ENCODE measurements at regions of chr3 and their contacts with region 1.

Region 1: DNA sequence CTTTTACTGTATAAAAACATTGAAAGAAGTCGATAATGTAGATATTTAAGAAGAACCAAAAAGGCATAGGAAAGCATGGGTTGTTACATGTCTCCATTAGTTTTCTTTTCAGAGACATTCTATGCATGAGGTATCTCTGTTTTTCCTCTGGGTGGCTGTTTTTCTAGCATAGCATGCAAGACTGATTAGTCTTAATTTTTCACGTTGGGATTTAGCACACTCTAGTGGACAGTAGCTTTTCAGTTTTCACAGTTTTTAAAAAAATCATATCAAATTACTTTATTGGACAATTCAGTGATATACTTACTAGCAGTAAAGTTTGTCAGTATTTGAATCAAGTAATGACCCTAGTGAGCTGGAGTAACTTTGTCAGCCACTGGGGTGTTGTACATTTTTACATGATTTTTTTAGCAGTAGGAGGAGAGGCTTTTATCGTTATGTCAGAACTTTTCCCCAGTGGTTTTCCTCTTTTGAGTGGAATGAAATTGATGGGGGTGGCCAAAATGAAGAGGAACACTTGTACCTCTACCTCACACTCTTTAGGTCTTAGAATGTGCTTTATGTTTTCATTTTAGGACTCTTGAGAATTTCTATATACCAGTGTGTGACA is 57.2 kb downstream of the SEC22A start:
- DNase-seq: no peak
- ATAC-seq: peak; percentile 89 to 96 (median 92)
- H3K4me3 ChIP-seq: no peak overlapping the region
- H3K27ac ChIP-seq: no peak overlapping the region
- H3K4me1 ChIP-seq: no peaks in the 10 kb centered on the region
- H3K27me3 ChIP-seq: no peaks in the 10 kb centered on the region
- CTCF ChIP-seq: peak; percentile 63 to 81 (median 70)
- POLR2A ChIP-seq: no peak

Region 2: DNA sequence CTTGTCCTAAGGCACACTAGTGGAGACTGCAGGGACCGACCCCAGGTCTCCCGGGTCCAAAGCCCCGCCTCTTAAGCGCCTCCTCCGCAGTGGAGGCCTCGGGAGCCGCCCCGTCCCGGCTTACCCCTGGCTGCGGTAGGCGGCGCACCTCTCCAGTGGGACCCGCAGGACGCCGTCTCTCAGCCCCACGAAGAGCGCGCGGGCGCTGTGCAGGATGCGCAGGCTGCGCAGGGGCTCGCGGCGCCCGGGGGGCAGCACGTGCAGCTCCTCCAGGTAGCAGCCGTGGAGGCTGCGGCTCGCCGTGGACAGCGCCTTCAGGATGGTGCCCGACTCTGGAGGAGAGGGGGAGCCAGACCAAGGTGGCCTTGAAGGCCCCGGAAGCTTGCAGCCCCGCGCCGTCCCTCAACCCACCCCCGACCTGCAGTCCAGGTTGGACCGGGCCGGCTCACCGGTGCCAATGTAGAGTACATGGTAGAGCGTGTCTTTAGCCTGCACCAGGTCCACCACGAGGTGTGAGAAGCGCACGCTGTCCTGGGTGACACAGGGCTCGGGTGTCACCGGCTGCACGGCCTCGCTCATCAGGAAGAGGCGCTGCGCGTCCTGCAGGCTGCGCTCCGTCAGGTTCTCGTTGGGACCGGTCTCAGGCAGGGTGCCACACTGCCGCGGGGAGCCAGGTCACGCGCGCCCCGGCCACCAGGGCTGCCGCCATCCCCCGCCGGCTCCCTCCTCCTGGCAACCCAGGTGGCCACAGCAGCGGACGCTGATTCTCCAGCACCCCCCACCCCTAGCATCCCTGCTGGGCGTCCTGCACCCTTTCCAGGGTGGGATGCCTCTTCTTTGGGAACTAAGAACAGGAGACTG is 336.9 kb before region 1 on chr3:
- intact Hi-C with region 1: loop called in 1 of 2 experiments (anchors 10 kb)
- DNase-seq: no peak
- ATAC-seq: peak; percentile 22 to 45 (median 32)
- H3K4me3 ChIP-seq: peak overlapping the region in 1 of 3 donors; percentile 10
- H3K27ac ChIP-seq: no peak overlapping the region
- H3K4me1 ChIP-seq: peaks cover 0 to 6% (median 0%) of the 10 kb centered on the region in 4 donors
- H3K27me3 ChIP-seq: no peaks in the 10 kb centered on the region
- CTCF ChIP-seq: no peak
- POLR2A ChIP-seq: no peak

Region 3: GRCh38 chr3:123642182-123642956 is 383.5 kb after region 1 on chr3:
- intact Hi-C with region 1: no loop called
- DNase-seq: peak in 2 of 3 donors; percentile 58 to 62
- ATAC-seq: peak; percentile 69 to 84 (median 78)
- H3K4me3 ChIP-seq: no peak overlapping the region
- H3K27ac ChIP-seq: no peak overlapping the region
- H3K4me1 ChIP-seq: no peaks in the 10 kb centered on the region
- H3K27me3 ChIP-seq: no peaks in the 10 kb centered on the region
- CTCF ChIP-seq: peak; percentile 63 to 81 (median 78)
- POLR2A ChIP-seq: no peak

Measured in right lobe of liver (tissue), 6 donors.